GM12878 (cell line): ENCODE measurements at regions of chr1 and their contacts with region 1.

Region 1: DNA sequence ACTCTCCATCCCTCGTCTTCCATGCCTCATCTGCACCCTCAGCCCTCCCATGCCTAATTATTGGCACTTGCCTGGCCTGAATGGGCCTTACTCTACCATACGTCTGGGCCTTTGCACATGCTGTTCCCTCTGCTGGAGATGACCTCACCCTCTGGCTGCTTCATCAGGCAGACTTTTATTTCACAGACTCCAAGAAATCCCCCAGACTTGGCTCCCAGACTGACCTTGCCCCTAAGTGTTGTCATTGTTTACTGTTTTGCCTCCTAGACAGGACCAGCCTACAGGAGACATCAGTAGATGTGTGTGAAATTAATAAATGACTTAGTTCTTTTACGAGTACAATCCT is 5.2 kb upstream of the AHDC1 start:
- DNase-seq: no peak
- ATAC-seq: peak; percentile 41
- H3K4me3 ChIP-seq: no peak overlapping the region
- H3K27ac ChIP-seq: peak overlapping the region; percentile 78
- H3K4me1 ChIP-seq: peaks cover 46% of the 10 kb centered on the region
- H3K27me3 ChIP-seq: no peaks in the 10 kb centered on the region
- CTCF ChIP-seq: no peak
- EP300 ChIP-seq: no peak
- POLR2A ChIP-seq: peak; percentile 57; the same call in 1 of the 2 replicates
- RAD21 ChIP-seq: no peak

Region 2: DNA sequence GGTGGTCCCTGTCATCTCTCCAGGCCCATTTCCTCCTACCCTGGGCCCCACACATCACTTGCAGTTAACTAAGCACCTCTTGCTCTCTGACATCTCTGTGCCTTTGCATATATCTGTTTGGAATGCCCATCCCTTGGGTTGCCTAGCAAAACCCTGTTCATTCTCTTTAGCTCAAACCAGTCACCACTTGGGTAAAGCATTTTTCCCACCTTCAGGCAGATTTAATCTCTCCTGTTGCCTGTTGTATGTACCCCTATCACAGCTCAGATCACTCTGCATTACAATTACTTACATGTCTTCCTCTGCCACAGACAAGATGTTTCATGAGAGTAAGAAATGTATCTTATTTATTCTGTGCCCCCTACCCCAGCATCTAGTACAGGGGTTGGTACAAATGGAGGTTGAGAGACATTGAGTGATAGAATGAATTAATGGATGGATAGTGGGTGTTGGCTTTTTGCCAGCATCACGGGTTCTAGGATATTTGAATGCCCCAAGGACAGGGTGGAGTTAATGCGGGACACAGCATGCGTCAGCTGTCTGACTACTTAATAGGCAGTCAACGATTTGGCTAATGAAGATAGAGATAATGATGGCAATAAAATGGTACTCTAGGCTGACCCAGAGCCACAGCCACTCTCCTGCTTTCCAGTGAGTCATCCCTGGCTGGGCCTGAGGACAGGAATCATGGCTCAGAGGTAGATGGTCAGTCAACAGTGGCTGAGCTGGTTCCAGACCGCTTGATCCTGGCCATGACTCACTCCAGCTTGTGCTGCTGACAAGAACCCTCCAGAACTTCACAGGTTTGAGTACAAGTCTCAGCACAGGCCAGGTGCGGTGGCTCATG is 701.9 kb before region 1 on chr1:
- CTCF ChIA-PET with region 1: no interaction called
- POLR2A ChIA-PET with region 1: no interaction called
- RAD21 ChIA-PET with region 1: no interaction called
- SMC1A ChIA-PET with region 1: no interaction called
- in situ Hi-C with region 1: no loop called
- intact Hi-C with region 1: no loop called
- DNase-seq: no peak
- ATAC-seq: no peak
- H3K4me3 ChIP-seq: no peak overlapping the region
- H3K27ac ChIP-seq: no peak overlapping the region
- H3K4me1 ChIP-seq: no peaks in the 10 kb centered on the region
- H3K27me3 ChIP-seq: no peaks in the 10 kb centered on the region
- CTCF ChIP-seq: no peak
- EP300 ChIP-seq: no peak
- POLR2A ChIP-seq: no peak
- RAD21 ChIP-seq: no peak

Region 3: GRCh38 chr1:27588256-27589232 is 20.6 kb before region 1 on chr1:
- CTCF ChIA-PET with region 1: no interaction called
- POLR2A ChIA-PET with region 1: no interaction called
- RAD21 ChIA-PET with region 1: no interaction called
- SMC1A ChIA-PET with region 1: no interaction called
- in situ Hi-C with region 1: no loop called
- intact Hi-C with region 1: no loop called
- DNase-seq: no peak
- ATAC-seq: no peak
- H3K4me3 ChIP-seq: no peak overlapping the region
- H3K27ac ChIP-seq: no peak overlapping the region
- H3K4me1 ChIP-seq: no peaks in the 10 kb centered on the region
- H3K27me3 ChIP-seq: no peaks in the 10 kb centered on the region
- CTCF ChIP-seq: no peak
- EP300 ChIP-seq: no peak
- POLR2A ChIP-seq: no peak
- RAD21 ChIP-seq: no peak

Region 4: GRCh38 chr1:27624467-27625178 is 15.4 kb after region 1 on chr1:
- CTCF ChIA-PET with region 1: interaction called, 208 read pairs
- POLR2A ChIA-PET with region 1: interaction called, 50 read pairs
- RAD21 ChIA-PET with region 1: interaction called, 183 read pairs
- SMC1A ChIA-PET with region 1: interaction called, 114 read pairs
- in situ Hi-C with region 1: no loop called
- intact Hi-C with region 1: loop called (anchors 2 kb)
- DNase-seq: peak; percentile 67
- ATAC-seq: peak; percentile 31
- H3K4me3 ChIP-seq: peak overlapping the region; percentile 93
- H3K27ac ChIP-seq: peak overlapping the region; percentile 85
- H3K4me1 ChIP-seq: peaks cover 63% of the 10 kb centered on the region
- H3K27me3 ChIP-seq: no peaks in the 10 kb centered on the region
- CTCF ChIP-seq: no peak
- EP300 ChIP-seq: no peak
- POLR2A ChIP-seq: no peak
- RAD21 ChIP-seq: no peak

Region 5: GRCh38 chr1:27643701-27644625 is 34.8 kb after region 1 on chr1:
- CTCF ChIA-PET with region 1: interaction called, 19 read pairs
- POLR2A ChIA-PET with region 1: interaction called, 5 read pairs
- RAD21 ChIA-PET with region 1: interaction called, 4 read pairs
- SMC1A ChIA-PET with region 1: interaction called, 13 read pairs
- in situ Hi-C with region 1: no loop called
- intact Hi-C with region 1: no loop called
- DNase-seq: no peak
- ATAC-seq: peak; percentile 99
- H3K4me3 ChIP-seq: no peak overlapping the region
- H3K27ac ChIP-seq: no peak overlapping the region
- H3K4me1 ChIP-seq: peaks cover 8% of the 10 kb centered on the region
- H3K27me3 ChIP-seq: no peaks in the 10 kb centered on the region
- CTCF ChIP-seq: peak; percentile 80 to 98 (median 94)
- EP300 ChIP-seq: no peak
- POLR2A ChIP-seq: no peak
- RAD21 ChIP-seq: peak; percentile 81

Region 6: DNA sequence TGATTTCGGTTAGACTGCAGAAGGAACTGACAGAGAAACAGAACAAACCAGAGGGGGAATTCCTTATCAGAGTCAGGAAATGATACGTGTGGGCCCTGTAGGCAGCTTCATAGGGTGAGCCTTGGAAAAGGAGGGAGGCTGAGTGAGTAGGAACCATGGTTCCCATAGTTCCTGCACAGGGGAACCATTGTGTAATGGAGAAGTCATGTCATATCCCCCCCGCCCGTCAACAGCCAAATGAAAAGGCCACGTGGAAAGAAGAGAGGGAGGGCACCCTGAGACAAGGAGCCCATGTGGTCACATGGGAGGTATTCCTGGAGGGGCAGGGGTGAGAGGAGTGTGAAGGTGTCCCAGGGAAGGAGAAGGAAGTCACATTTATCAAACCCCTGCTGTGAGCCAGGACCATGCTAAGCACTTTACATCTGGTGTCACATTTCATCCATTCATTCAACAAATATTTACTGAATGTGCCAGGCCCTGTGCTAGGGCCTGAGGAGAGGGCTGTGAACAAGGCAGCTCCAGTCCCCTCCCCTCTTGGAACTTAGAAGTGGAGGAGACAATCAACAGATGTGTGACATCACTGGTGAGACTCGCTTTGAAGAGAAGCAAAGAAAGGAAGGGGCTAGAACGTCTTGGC is 41.5 kb after region 1 on chr1:
- CTCF ChIA-PET with region 1: interaction called, 30 read pairs
- POLR2A ChIA-PET with region 1: interaction called, 49 read pairs
- RAD21 ChIA-PET with region 1: interaction called, 5 read pairs
- SMC1A ChIA-PET with region 1: interaction called, 38 read pairs
- in situ Hi-C with region 1: no loop called
- intact Hi-C with region 1: no loop called
- DNase-seq: no peak
- ATAC-seq: peak; percentile 38
- H3K4me3 ChIP-seq: no peak overlapping the region
- H3K27ac ChIP-seq: peak overlapping the region; percentile 24
- H3K4me1 ChIP-seq: peaks cover 30% of the 10 kb centered on the region
- H3K27me3 ChIP-seq: no peaks in the 10 kb centered on the region
- CTCF ChIP-seq: no peak
- EP300 ChIP-seq: no peak
- POLR2A ChIP-seq: no peak
- RAD21 ChIP-seq: no peak